Naive thymus-derived CD4-positive, alpha-beta T cell (primary cell): ENCODE measurements at regions of chr3 and their contacts with region 1.

Region 1: DNA sequence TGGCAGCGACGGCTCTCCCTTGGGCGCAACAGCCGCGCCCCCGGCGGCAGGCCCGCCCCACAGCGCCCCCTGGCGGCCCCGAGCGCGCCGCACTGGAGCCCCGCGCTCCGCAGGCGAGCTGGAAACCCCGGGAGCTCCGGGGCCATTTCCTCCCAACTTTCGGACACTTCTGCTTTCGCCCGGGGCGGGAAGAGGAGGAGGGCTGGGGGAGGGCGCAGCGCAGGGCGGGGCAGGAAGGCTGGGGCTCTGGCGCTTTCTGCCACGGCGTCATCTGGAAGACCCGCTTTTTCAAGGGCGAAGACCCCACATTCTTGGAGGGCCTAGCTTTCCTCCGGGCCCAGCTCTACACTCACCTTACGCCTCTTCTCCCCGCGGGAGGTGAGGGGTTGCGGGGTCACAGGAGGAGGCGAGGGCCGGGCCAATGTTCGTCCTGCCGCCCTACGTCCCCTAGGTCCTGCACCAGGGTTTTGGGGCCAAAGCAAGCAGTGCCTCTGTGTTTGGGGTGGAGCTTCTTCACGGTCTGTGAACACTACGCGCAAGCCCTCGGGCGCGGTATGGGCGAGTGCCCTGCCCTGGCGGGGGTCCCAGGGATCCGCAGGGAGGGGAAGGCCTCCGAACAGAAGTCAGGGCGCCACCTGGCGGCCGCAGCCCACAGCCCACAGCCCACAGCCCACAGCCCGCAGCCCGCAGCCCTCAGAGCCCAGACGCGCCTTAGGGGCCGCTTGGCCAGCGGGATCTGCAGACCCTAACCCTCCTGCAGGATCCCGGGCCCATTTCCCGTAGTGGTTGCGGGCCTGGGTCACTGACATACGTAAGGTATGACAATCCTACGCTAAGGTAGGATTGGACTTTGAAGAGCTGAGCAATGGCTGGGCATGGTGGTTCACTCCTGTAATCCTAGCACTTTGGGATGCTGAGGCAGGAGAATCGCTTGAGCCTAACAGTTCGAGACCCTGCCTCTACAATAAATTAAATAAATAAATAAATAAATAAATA is 31.1 kb downstream of the FOXL2 start:
- DNase-seq: peak; percentile 66 to 91 (median 80)
- ATAC-seq: peak; percentile 90
- H3K4me3 ChIP-seq: peak overlapping the region; percentile 88
- H3K4me3 Mint-ChIP-seq: peak overlapping the region; percentile 54 to 88 (median 86)
- H3K27ac ChIP-seq: peak overlapping the region; percentile 62
- H3K27ac Mint-ChIP-seq: peak overlapping the region in 6 of 9 donors; percentile 21 to 77 (median 62)
- H3K4me1 ChIP-seq: no peaks in the 10 kb centered on the region
- H3K4me1 Mint-ChIP-seq: peaks cover 5 to 9% (median 6%) of the 10 kb centered on the region in 7 donors
- H3K27me3 ChIP-seq: no peaks in the 10 kb centered on the region
- H3K27me3 Mint-ChIP-seq: peaks cover 0 to 37% (median 0%) of the 10 kb centered on the region in 5 donors

Region 2: DNA sequence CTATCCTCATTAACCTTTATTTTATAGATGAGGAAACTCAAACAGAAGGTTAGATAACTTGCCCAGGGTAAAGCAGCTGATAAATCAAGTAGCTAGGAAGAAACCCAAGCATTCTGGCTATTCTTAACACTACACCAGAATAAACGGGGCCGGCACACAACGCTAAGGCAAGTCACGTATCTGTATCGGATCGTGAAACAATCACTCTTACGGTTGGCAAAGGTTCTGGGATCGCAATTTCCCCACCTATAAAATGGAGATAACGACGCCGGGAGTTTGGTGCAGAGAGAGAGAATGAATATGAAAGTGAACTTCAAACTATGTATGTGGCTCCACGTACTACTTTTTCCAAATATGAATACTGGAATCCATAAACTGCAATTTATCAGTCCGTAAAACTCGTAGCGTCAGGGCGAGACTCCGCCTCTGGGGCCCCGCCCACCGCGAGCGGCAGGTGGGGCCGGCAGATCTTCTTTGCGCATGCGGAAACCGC is 729.0 kb before region 1 on chr3:
- CTCF ChIA-PET with region 1: interaction called, 8 read pairs
- POLR2A ChIA-PET with region 1: no interaction called
- intact Hi-C with region 1: loop called (anchors 1 to 5 kb)
- DNase-seq: peak; percentile 83 to 91 (median 87)
- ATAC-seq: peak; percentile 96
- H3K4me3 ChIP-seq: peak overlapping the region; percentile 98
- H3K4me3 Mint-ChIP-seq: peak overlapping the region; percentile 89 to 99 (median 97)
- H3K27ac ChIP-seq: peak overlapping the region; percentile 86
- H3K27ac Mint-ChIP-seq: peak overlapping the region; percentile 92 to 96 (median 93)
- H3K4me1 ChIP-seq: peaks cover 13 to 24% of the 10 kb centered on the region in 2 donors
- H3K4me1 Mint-ChIP-seq: peaks cover 32 to 54% (median 45%) of the 10 kb centered on the region in 7 donors
- H3K27me3 ChIP-seq: no peaks in the 10 kb centered on the region
- H3K27me3 Mint-ChIP-seq: peaks cover 0 to 19% (median 9%) of the 10 kb centered on the region in 5 donors

Region 3: GRCh38 chr3:138608322-138609135 is 307.3 kb before region 1 on chr3 and contains the start of gene FAIM:
- CTCF ChIA-PET with region 1: interaction called, 7 read pairs
- POLR2A ChIA-PET with region 1: interaction called, 7 read pairs
- intact Hi-C with region 1: loop called in 1 of 2 experiments (anchors 1 kb)
- DNase-seq: peak; percentile 54 to 82 (median 77)
- ATAC-seq: peak; percentile 84
- H3K4me3 ChIP-seq: peak within 1 kb of the TSS; percentile 81
- H3K4me3 Mint-ChIP-seq: peak within 1 kb of the TSS; percentile 84 to 96 (median 91)
- H3K27ac ChIP-seq: peak within 1 kb of the TSS; percentile 90
- H3K27ac Mint-ChIP-seq: peak within 1 kb of the TSS; percentile 84 to 100 (median 98)
- H3K4me1 ChIP-seq: peaks cover 14 to 15% of the 10 kb centered on the region in 2 donors
- H3K4me1 Mint-ChIP-seq: peaks cover 6 to 21% (median 18%) of the 10 kb centered on the region in 7 donors
- H3K27me3 ChIP-seq: no peaks in the 10 kb centered on the region
- H3K27me3 Mint-ChIP-seq: peaks cover 0 to 3% (median 0%) of the 10 kb centered on the region in 5 donors
- total RNA-seq, gene FAIM: 1.6 to 3.3 (median 2.6) TPM

Region 4: DNA sequence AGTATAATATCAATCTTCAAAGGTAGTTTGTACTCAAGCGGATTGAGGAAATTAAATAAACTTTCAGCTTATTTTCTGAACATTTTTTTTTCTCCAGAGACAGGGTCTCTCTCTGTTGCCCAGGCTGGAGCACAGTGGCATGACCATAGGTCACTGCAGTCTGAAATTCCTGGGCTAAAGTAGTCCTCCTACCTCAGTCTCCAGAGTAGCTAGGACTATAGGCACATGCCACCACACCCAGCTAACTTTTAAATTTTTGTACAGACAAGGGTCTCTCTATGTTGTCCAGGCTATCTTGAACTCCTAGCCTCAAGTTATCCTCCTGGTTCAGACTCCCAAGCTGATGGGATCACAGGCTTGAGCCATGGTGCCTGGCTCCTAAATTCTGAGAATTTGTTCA is 210.1 kb before region 1 on chr3:
- CTCF ChIA-PET with region 1: interaction called, 73 read pairs
- POLR2A ChIA-PET with region 1: interaction called, 3 read pairs
- intact Hi-C with region 1: no loop called
- DNase-seq: no peak
- ATAC-seq: no peak
- H3K4me3 ChIP-seq: no peak overlapping the region
- H3K4me3 Mint-ChIP-seq: no peak overlapping the region
- H3K27ac ChIP-seq: no peak overlapping the region
- H3K27ac Mint-ChIP-seq: peak overlapping the region in 1 of 9 donors; percentile 56
- H3K4me1 ChIP-seq: no peaks in the 10 kb centered on the region
- H3K4me1 Mint-ChIP-seq: no peaks in the 10 kb centered on the region
- H3K27me3 ChIP-seq: no peaks in the 10 kb centered on the region
- H3K27me3 Mint-ChIP-seq: no peaks in the 10 kb centered on the region

Region 5: GRCh38 chr3:138818185-138818860 is 97.5 kb before region 1 on chr3:
- CTCF ChIA-PET with region 1: interaction called, 9 read pairs
- POLR2A ChIA-PET with region 1: no interaction called
- intact Hi-C with region 1: loop called in 1 of 2 experiments (anchors 1 kb)
- DNase-seq: no peak
- ATAC-seq: peak; percentile 26
- H3K4me3 ChIP-seq: no peak overlapping the region
- H3K4me3 Mint-ChIP-seq: peak overlapping the region in 4 of 10 donors; percentile 5 to 39 (median 28)
- H3K27ac ChIP-seq: no peak overlapping the region
- H3K27ac Mint-ChIP-seq: peak overlapping the region in 6 of 9 donors; percentile 35 to 84 (median 64)
- H3K4me1 ChIP-seq: peaks cover 12 to 15% of the 10 kb centered on the region in 2 donors
- H3K4me1 Mint-ChIP-seq: peaks cover 22 to 61% (median 50%) of the 10 kb centered on the region in 7 donors
- H3K27me3 ChIP-seq: no peaks in the 10 kb centered on the region
- H3K27me3 Mint-ChIP-seq: no peaks in the 10 kb centered on the region

Region 6: GRCh38 chr3:138935848-138936740 is 20.3 kb after region 1 on chr3:
- CTCF ChIA-PET with region 1: interaction called, 15 read pairs
- POLR2A ChIA-PET with region 1: interaction called, 4 read pairs
- intact Hi-C with region 1: no loop called
- DNase-seq: peak; percentile 30 to 81 (median 67)
- ATAC-seq: peak; percentile 90
- H3K4me3 ChIP-seq: peak overlapping the region; percentile 55
- H3K4me3 Mint-ChIP-seq: peak overlapping the region; percentile 60 to 86 (median 76)
- H3K27ac ChIP-seq: no peak overlapping the region
- H3K27ac Mint-ChIP-seq: peak overlapping the region in 1 of 9 donors; percentile 29
- H3K4me1 ChIP-seq: peaks cover 21 to 31% of the 10 kb centered on the region in 2 donors
- H3K4me1 Mint-ChIP-seq: peaks cover 19 to 43% (median 31%) of the 10 kb centered on the region in 7 donors
- H3K27me3 ChIP-seq: peaks cover 14 to 50% of the 10 kb centered on the region in 2 donors
- H3K27me3 Mint-ChIP-seq: peaks cover 55 to 84% (median 77%) of the 10 kb centered on the region in 5 donors